H1 (cell line): ENCODE measurements at regions of chr7 and their contacts with region 1.

Region 1: DNA sequence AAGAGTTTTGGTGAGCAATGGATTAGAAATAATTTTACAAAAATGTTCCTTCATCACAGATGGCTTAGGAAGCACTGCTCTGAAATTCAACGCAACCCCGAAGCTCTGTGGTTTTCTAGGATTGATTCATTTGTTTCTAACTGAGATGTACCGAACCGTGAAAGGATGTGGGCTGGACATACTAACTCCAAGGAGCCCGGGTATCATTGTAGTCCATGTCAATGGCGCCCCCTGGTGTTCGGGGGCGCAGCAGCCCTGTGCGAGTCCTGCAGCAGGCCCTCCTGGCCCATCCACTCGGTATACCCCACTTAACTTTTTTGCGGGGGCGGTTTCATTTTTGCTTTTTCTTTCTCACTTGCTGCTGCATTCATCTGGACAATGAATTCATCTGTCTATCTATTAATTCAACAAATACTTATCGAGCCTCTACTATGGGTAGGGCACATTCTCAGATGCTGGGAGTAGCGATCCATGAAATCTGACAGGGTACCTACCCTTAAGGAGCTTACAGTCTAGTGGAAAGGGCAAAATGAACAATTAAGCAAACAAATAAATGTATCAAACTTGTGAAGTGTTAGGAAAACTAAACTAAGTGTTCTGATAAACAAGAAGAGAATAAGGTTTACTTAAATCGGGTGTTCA is 25.2 kb upstream of the ITPRID1 start:
- DNase-seq: peak; percentile 69 to 90
- H3K4me3 ChIP-seq: no peak overlapping the region
- H3K27ac ChIP-seq: no peak overlapping the region
- H3K4me1 ChIP-seq: peaks cover 0 to 5% (median 3%) of the 10 kb centered on the region in 4 experiments; a peak in 3 of 7 replicates
- H3K27me3 ChIP-seq: no peaks in the 10 kb centered on the region
- CTCF ChIP-seq: peak; percentile 84 to 92 (median 90)
- EP300 ChIP-seq: no peak
- POLR2A ChIP-seq: no peak
- RAD21 ChIP-seq: peak; percentile 91 to 96

Region 2: DNA sequence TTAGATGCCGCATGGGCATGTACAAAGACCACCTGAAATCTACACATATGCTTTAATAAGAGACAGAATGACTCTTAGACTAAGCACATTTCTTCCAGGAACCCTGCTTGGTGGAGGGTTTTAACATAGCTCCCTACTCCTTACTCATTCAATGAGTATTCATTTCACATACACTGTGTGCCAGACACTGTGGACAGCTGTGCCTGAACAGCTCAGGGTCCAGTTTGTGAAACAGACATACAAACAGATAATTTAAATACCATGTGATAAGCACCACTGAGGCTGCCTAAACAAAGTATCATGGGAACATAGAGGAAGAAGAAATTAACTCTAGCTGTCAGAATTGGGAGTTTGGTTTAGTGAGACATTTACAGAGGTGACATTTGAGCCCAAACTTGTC is 40.0 kb before region 1 on chr7:
- CTCF ChIA-PET with region 1: interaction called, 94 read pairs
- POLR2A ChIA-PET with region 1: no interaction called
- DNase-seq: no peak
- H3K4me3 ChIP-seq: no peak overlapping the region
- H3K27ac ChIP-seq: no peak overlapping the region
- H3K4me1 ChIP-seq: no peaks in the 10 kb centered on the region
- H3K27me3 ChIP-seq: peaks cover 0 to 2% (median under 1%) of the 10 kb centered on the region in 4 experiments; a peak in 2 of 7 replicates
- CTCF ChIP-seq: no peak
- EP300 ChIP-seq: no peak
- POLR2A ChIP-seq: no peak
- RAD21 ChIP-seq: no peak

Region 3: DNA sequence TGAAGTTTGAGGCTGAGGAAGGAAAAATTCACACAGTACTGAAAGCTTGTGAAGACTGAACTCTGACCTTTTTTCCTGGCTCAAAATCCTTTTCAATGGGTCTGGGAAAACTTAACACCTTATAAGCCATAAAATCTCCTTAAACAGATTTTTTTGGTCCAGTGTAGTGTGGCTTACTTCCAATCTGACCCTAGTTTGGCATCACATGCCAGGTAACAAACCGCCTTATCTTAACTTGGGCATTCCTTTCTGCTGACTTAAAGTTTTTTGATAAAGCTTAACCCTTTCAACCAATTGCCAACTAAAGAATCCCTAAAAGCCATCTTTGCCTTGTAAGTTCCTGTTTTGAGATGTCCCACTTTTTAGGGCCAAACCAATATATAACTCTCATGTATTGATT is 12.0 kb after region 1 on chr7:
- CTCF ChIA-PET with region 1: interaction called, 10 read pairs
- POLR2A ChIA-PET with region 1: no interaction called
- DNase-seq: no peak
- H3K4me3 ChIP-seq: no peak overlapping the region
- H3K27ac ChIP-seq: no peak overlapping the region
- H3K4me1 ChIP-seq: no peaks in the 10 kb centered on the region
- H3K27me3 ChIP-seq: no peaks in the 10 kb centered on the region
- CTCF ChIP-seq: no peak
- EP300 ChIP-seq: no peak
- POLR2A ChIP-seq: no peak
- RAD21 ChIP-seq: no peak

Region 4: DNA sequence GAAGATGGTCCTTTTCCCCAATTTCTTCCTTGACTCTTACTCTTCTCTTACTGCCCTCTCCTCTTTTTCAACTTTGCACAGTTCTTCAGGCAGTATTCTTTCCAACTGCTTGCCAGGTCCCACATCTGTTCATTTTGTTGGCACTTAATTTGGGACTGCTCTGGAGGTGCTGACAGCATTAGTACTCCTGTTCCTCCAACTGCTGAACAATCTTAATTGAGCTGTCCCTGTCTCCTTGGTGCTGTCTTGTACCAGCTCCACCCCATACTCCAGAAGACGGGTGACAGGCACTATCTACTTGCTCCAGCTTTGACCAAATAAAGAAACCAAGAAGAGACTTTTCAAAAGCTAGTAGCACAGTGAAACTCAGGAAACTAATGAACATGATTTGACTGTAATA is 421.5 kb after region 1 on chr7:
- CTCF ChIA-PET with region 1: no interaction called
- POLR2A ChIA-PET with region 1: no interaction called
- DNase-seq: no peak
- H3K4me3 ChIP-seq: no peak overlapping the region
- H3K27ac ChIP-seq: no peak overlapping the region
- H3K4me1 ChIP-seq: peaks cover 0 to 4% (median 0%) of the 10 kb centered on the region in 4 experiments; a peak in 1 of 7 replicates
- H3K27me3 ChIP-seq: no peaks in the 10 kb centered on the region
- CTCF ChIP-seq: no peak
- EP300 ChIP-seq: no peak
- POLR2A ChIP-seq: no peak
- RAD21 ChIP-seq: no peak